PC-9 (cell line): ENCODE measurements at regions of chr9 and their contacts with region 1.

Region 1: DNA sequence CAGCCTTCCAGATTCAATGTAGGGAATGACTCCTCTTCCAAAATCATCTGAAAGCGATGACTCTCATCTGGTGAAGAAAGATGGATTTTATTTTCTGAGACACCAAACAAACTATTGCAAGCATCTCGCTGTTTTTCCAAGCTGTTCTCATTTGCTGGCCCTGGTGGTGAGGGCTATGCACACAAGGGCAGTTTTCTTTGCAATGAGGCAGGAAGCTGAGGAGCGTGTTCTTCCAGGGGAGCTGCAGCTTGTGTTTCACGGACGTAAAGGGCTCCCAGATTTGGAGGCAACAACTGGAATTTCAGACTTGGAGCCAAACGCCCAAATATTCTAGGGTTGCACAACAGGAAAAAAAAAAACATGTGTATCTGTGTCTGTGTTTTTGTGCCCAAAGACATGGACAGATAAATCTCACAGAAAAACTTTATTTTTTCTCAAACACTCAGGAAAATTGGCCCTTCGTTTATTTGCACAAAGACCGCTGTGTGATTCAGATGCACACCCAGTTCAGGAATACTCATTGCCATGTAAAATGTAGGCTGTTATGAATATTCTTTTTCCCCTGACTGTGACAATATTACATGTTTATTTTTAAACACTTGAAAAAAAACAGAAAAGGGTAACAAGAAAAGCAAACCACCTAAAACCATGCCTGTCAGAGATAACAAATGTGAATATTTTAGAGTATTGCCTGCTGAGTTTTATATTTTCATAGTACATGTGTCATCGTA is 151.3 kb downstream of the GAS1 start:
- DNase-seq: no peak
- H3K4me3 ChIP-seq: no peak overlapping the region
- H3K27ac ChIP-seq: no peak overlapping the region
- H3K4me1 ChIP-seq: peaks cover 12% of the 10 kb centered on the region
- H3K27me3 ChIP-seq: no peaks in the 10 kb centered on the region
- CTCF ChIP-seq: no peak

Region 2: DNA sequence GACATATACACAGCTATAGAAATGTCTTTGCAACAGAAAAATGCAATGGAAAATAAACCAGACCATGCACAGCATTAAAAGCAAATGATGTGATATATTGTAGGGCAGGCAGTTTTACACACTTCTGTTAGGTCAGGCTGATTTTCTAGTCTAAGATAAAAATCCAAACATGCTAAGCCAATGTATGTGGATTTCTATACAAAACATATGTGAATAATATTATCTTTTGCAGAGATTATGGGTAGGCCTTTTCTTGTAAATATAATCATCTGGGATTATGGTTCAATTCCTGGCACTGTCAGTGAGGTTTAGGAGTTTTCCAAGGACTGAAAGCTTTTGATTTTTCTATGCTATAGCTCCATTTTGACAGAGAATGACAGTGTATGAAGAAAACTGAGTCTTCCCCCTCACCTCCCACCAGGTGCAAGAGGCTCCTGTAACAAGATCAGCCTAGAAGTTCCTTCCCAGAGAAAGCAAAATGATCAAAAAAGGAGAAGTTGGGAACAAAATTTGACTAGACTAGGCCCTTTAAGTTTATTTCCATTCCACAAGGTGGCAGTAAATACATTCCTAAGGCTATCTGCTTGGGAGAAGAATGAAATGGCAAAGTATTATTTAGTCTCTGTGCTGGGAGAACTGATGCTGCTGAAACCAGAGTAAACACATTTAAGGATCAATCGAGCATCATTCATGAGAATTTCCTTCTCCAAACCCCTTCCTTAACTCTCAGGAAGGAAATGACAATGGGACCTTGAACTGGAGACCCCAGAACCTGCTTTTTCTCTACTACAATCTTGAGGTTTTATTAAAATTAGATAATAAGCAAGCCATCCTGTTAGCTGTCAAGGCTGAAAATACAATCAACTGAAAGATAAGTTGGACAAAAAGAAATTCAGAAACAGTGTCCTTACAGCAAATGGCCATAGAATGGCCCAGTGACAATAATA is 308.8 kb before region 1 on chr9:
- CTCF ChIA-PET with region 1: no interaction called
- POLR2A ChIA-PET with region 1: no interaction called
- intact Hi-C with region 1: loop called (anchors 5 kb)
- DNase-seq: peak in 1 of 2 experiments; percentile 54
- H3K4me3 ChIP-seq: no peak overlapping the region
- H3K27ac ChIP-seq: no peak overlapping the region
- H3K4me1 ChIP-seq: 0 out of 2 replicates have a peak, but pooled peaks cover 6% of the 10 kb centered on the region
- H3K27me3 ChIP-seq: no peaks in the 10 kb centered on the region
- CTCF ChIP-seq: peak; percentile 85

Region 3: DNA sequence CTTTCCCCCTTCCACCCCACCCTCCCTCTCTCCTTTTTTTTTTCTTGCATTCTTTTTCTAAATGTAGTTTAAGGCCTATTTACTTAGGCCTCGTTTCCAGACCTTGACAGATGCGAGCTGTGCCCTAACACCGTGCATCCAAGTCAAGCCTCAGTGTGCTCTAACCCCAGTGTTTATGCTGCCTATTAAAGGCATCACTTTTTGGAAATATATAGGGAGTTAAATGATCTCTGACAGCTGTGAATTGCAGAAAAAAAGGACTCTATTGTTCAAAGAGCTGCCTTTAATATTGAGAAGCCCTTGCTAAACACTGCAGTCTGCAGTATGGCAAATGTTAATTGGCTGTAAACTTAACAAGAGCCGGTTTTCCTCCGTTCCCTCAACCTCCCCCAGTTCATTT is 171.4 kb before region 1 on chr9:
- CTCF ChIA-PET with region 1: no interaction called
- POLR2A ChIA-PET with region 1: no interaction called
- intact Hi-C with region 1: loop called (anchors 10 kb)
- DNase-seq: no peak
- H3K4me3 ChIP-seq: no peak overlapping the region
- H3K27ac ChIP-seq: no peak overlapping the region
- H3K4me1 ChIP-seq: no peaks in the 10 kb centered on the region
- H3K27me3 ChIP-seq: no peaks in the 10 kb centered on the region
- CTCF ChIP-seq: no peak

Region 4: GRCh38 chr9:86732514-86733171 is 63.3 kb before region 1 on chr9:
- CTCF ChIA-PET with region 1: no interaction called
- POLR2A ChIA-PET with region 1: interaction called, 5 read pairs
- intact Hi-C with region 1: loop called (anchors 5 kb)
- DNase-seq: peak in 1 of 2 experiments; percentile 75
- H3K4me3 ChIP-seq: no peak overlapping the region
- H3K27ac ChIP-seq: peak overlapping the region; percentile 37
- H3K4me1 ChIP-seq: peaks cover 26% of the 10 kb centered on the region
- H3K27me3 ChIP-seq: no peaks in the 10 kb centered on the region
- CTCF ChIP-seq: no peak

Region 5: GRCh38 chr9:86749894-86750255 is 46.1 kb before region 1 on chr9:
- CTCF ChIA-PET with region 1: no interaction called
- POLR2A ChIA-PET with region 1: no interaction called
- intact Hi-C with region 1: loop called (anchors 5 kb)
- DNase-seq: no peak
- H3K4me3 ChIP-seq: no peak overlapping the region
- H3K27ac ChIP-seq: no peak overlapping the region
- H3K4me1 ChIP-seq: no peaks in the 10 kb centered on the region
- H3K27me3 ChIP-seq: no peaks in the 10 kb centered on the region
- CTCF ChIP-seq: no peak